A673 (cell line): ENCODE measurements at regions of chr7 and their contacts with region 1.

Region 1: GRCh38 chr7:5083311-5083711 is 37.7 kb downstream of the RBAK start:
- DNase-seq: no peak
- H3K4me3 ChIP-seq: no peak overlapping the region
- H3K27ac ChIP-seq: no peak overlapping the region
- H3K4me1 ChIP-seq: no peaks in the 10 kb centered on the region
- H3K27me3 ChIP-seq: peaks cover 4% of the 10 kb centered on the region
- CTCF ChIP-seq: no peak

Region 2: GRCh38 chr7:4610768-4611467 is 472.4 kb before region 1 on chr7:
- CTCF ChIA-PET with region 1: no interaction called
- POLR2A ChIA-PET with region 1: no interaction called
- intact Hi-C with region 1: loop called (anchors 10 kb)
- DNase-seq: peak; percentile 75
- H3K4me3 ChIP-seq: no peak overlapping the region
- H3K27ac ChIP-seq: no peak overlapping the region
- H3K4me1 ChIP-seq: peaks cover 12% of the 10 kb centered on the region
- H3K27me3 ChIP-seq: no peaks in the 10 kb centered on the region
- CTCF ChIP-seq: peak; percentile 74

Region 3: DNA sequence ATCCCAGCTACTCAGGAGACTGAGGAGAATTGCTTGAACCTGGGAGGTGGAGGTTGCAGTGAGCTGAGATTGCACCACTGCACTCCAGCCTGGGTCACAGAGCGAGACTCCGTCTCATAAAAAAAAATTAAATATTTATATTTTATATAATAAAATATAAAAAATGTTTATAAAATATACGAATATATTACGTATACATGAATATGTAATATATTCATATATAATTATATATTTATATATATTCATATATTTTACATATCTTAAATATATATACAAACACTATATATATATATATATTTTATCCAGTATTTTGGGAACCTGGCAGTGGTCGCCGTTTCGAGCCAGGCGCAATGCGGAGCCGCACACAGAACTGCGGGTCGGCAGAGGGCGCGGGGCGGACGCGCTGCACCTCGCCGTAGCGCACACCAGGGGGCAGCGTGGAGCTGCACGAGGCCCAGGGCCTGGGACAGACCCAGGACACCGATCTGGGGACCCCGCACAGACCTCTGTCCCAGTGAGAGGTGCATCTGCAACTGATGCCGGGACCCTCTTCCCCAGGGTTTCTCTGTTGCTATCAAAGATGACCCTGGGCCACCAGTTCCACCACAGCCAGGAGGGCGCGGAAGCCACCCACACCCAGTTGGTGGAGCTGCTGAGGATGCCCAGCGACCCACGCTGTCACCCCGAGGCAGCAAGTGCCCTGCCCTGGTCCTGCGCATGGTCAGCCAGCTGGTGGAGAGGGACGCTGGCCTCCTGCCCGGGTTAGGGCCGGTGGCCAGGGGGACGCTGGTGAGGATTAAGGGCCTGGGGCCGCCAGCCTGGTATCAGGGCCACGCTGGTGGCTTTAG is 285.2 kb before region 1 on chr7:
- CTCF ChIA-PET with region 1: interaction called, 4 read pairs
- POLR2A ChIA-PET with region 1: no interaction called
- intact Hi-C with region 1: loop called (anchors 1 kb)
- DNase-seq: peak; percentile 58
- H3K4me3 ChIP-seq: no peak overlapping the region
- H3K27ac ChIP-seq: no peak overlapping the region
- H3K4me1 ChIP-seq: no peaks in the 10 kb centered on the region
- H3K27me3 ChIP-seq: no peaks in the 10 kb centered on the region
- CTCF ChIP-seq: peak; percentile 81

Region 4: GRCh38 chr7:4830176-4830575 is 253.1 kb before region 1 on chr7:
- CTCF ChIA-PET with region 1: no interaction called
- POLR2A ChIA-PET with region 1: no interaction called
- intact Hi-C with region 1: loop called (anchors 1 kb)
- DNase-seq: peak; percentile 86
- H3K4me3 ChIP-seq: no peak overlapping the region
- H3K27ac ChIP-seq: no peak overlapping the region
- H3K4me1 ChIP-seq: no peaks in the 10 kb centered on the region
- H3K27me3 ChIP-seq: no peaks in the 10 kb centered on the region
- CTCF ChIP-seq: peak; percentile 99

Region 5: DNA sequence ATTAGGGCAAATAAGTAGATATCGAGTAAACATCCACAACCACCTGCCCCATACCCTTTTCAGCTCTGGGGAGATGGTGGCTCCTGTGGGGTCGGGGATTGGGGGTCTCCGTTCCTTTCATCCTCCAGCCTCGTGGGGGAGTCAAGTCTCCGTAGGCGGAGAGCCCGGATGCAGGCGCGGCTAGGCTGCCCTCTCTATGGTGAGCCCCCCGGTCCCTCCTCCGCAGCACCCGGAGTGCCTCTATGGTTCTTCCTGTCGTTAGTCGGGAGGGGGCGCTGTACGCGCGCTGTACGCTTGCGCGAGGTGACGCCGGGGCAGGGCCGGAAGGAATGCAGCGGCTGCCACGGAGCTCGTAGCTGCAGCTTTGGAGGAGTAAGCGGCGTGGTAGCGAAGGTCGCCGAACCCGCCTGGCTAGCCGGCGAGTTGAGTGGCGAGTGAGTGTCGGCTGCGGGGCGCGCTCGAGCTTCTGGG is 109.5 kb before region 1 on chr7:
- CTCF ChIA-PET with region 1: interaction called, 20 read pairs
- POLR2A ChIA-PET with region 1: no interaction called
- intact Hi-C with region 1: loop called (anchors 5 kb)
- DNase-seq: peak; percentile 97
- H3K4me3 ChIP-seq: peak overlapping the region; percentile 90
- H3K27ac ChIP-seq: peak overlapping the region; percentile 92
- H3K4me1 ChIP-seq: peaks cover 3% of the 10 kb centered on the region
- H3K27me3 ChIP-seq: no peaks in the 10 kb centered on the region
- CTCF ChIP-seq: peak; percentile 96